ENCODE measurements at regions of chr1 and their contacts with region 1.

Region 1: DNA sequence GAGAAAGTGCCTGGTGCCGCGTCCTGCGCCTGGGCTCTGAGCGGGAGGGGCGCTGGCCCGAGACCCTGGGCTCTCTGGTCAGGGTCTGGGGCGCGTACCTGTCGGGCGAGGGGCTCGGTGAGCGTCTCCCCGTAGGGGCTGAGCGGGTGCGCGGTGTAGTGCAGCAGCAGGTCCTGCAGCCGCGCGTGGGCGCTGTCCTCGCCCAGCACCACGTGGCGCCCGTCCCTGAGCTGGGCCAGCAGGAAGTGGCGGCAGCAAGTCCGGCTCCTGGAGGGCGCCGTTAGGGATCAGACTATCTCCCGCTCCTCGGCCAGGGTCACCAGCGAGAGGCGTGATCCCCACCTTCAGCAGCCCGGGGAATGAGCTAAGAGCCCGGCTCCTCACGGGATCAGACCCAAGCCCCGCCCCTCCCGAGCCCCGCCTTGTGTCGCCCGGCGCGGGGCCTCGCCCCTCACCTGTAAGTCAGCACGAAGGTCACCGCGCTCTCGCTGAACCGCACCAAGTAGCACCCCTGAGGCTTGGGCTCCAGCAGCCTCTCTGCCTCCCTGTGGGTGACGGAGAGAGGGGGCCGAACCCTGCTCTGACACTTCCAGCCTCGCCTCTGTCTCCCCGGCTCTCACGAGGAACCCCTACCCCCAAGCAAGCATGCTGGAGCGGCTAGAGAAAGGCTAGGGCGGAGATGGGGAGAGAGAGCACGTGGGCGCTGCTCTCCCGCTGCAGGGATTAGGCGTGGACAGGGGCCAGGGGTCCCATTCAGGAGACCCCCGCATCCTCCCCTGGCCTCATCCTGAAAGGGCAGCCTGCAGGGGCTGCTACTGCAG is 2.7 kb downstream of the SH2D2A start:
- DNase-seq: peak; percentile 68
- H3K4me3 ChIP-seq: peak overlapping the region; percentile 39
- H3K27ac ChIP-seq: peak overlapping the region; percentile 20
- H3K4me1 ChIP-seq: peaks cover 31% of the 10 kb centered on the region
- H3K27me3 ChIP-seq: no peaks in the 10 kb centered on the region
- CTCF ChIP-seq: peak; percentile 83

Region 2: DNA sequence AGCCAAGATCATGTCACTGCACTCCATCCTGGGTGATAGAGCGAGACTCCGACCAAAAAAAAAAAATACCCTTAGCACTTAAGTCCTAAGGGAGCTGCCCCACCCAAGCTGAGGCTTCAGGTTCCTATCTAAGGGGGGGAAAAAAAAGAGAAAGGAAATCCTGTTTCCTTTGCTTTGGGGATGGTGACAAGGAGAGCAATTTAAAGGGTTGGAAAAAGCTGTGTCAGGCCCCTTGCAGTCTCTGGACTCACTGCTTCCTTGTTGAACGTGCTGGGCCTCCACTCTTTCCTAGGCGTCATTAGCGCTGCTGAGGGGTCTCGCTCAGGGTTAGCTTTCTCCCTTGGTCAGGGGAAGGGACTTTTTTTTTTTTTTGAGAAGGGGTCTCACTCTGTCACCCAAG is 28.5 kb before region 1 on chr1:
- CTCF ChIA-PET with region 1: interaction called, 3 read pairs
- POLR2A ChIA-PET with region 1: interaction called, 11 read pairs
- intact Hi-C with region 1: no loop called
- DNase-seq: no peak
- H3K4me3 ChIP-seq: no peak overlapping the region
- H3K27ac ChIP-seq: no peak overlapping the region
- H3K4me1 ChIP-seq: no peaks in the 10 kb centered on the region
- H3K27me3 ChIP-seq: no peaks in the 10 kb centered on the region
- CTCF ChIP-seq: no peak

Measured in A673 (cell line).